ENCODE measurements at regions of chr10 and their contacts with region 1.

Region 1: DNA sequence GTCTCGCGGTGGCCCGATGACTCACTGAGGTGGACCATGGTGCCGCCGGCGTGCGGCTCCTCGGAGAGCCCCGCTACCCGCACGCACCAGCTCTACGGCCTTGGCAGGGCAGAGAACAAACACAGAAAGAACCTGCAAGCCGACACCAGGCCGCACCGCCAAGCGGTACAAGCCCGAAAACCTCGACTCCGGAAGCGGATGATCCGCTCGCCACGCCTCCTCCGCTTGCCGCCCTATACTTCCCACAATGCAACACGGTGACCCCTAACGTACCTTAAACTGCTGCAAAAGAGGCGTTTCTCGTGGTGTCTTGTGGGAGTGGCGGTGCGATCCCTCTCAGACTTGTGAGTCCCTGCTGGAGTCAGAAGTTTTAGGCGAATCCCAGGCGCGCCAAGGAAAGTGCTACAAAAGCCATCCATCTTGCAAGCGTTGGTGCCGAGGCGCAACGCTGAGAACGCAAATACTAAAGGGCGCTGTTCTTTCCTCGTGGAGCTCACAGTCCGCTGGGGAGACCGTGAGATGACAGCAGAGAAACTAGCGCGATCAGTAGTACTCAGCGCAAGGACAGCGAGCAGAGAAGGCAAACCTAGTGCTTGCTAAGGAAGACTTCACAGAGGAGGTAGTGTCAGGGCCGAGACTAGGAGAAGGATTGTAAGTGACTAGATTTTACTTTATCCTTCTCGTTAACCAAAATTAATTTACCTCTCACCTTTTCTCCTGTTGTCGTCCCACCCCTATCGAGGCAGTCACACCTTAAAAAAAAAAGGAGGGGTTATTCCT is at the start of gene MRPS16:
- DNase-seq: peak; percentile 95
- ATAC-seq: peak; percentile 90
- H3K4me3 ChIP-seq: peak within 1 kb of the TSS; percentile 76 to 98 (median 90)
- H3K4me3 Mint-ChIP-seq: peak within 1 kb of the TSS; percentile 100
- H3K27ac ChIP-seq: peak within 1 kb of the TSS; percentile 83 to 92
- H3K27ac Mint-ChIP-seq: peak within 1 kb of the TSS; percentile 90
- H3K4me1 ChIP-seq: peaks cover 23 to 28% of the 10 kb centered on the region in 2 donors
- H3K4me1 Mint-ChIP-seq: peaks cover 43% of the 10 kb centered on the region
- H3K27me3 ChIP-seq: no peaks in the 10 kb centered on the region
- H3K27me3 Mint-ChIP-seq: no peaks in the 10 kb centered on the region
- CTCF ChIP-seq: no peak
- total RNA-seq, gene MRPS16: 47.9 and 49.6 TPM in 2 replicates

Region 2: GRCh38 chr10:73110345-73110849 is 142.2 kb before region 1 on chr10 and contains the start of gene NUDT13:
- CTCF ChIA-PET with region 1: no interaction called
- POLR2A ChIA-PET with region 1: no interaction called
- intact Hi-C with region 1: loop called (anchors 5 kb)
- DNase-seq: peak; percentile 80
- ATAC-seq: peak; percentile 93
- H3K4me3 ChIP-seq: peak within 1 kb of the TSS; percentile 50 to 79 (median 71)
- H3K4me3 Mint-ChIP-seq: peak within 1 kb of the TSS; percentile 97
- H3K27ac ChIP-seq: peak within 1 kb of the TSS; percentile 26 to 62
- H3K27ac Mint-ChIP-seq: peak within 1 kb of the TSS; percentile 93
- H3K4me1 ChIP-seq: peaks cover 0 to 9% of the 10 kb centered on the region in 2 donors
- H3K4me1 Mint-ChIP-seq: peaks cover 11% of the 10 kb centered on the region
- H3K27me3 ChIP-seq: no peaks in the 10 kb centered on the region
- H3K27me3 Mint-ChIP-seq: no peaks in the 10 kb centered on the region
- CTCF ChIP-seq: no peak
- total RNA-seq, gene NUDT13: 4.5 TPM in 2 replicates

Region 3: GRCh38 chr10:73358331-73359279 is 106.0 kb after region 1 on chr10 and contains the start of gene CFAP70:
- CTCF ChIA-PET with region 1: no interaction called
- POLR2A ChIA-PET with region 1: no interaction called
- intact Hi-C with region 1: loop called (anchors 1 kb)
- DNase-seq: peak; percentile 95
- ATAC-seq: peak; percentile 97
- H3K4me3 ChIP-seq: peak within 1 kb of the TSS; percentile 58 to 84 (median 73)
- H3K4me3 Mint-ChIP-seq: peak within 1 kb of the TSS; percentile 98
- H3K27ac ChIP-seq: peak within 1 kb of the TSS; percentile 26 to 79
- H3K27ac Mint-ChIP-seq: peak within 1 kb of the TSS; percentile 94
- H3K4me1 ChIP-seq: peaks cover 6 to 11% of the 10 kb centered on the region in 2 donors
- H3K4me1 Mint-ChIP-seq: peaks cover 15% of the 10 kb centered on the region
- H3K27me3 ChIP-seq: peaks cover 0 to 6% (median 0%) of the 10 kb centered on the region in 4 experiments
- H3K27me3 Mint-ChIP-seq: peaks cover 4% of the 10 kb centered on the region
- CTCF ChIP-seq: no peak
- total RNA-seq, gene CFAP70: 2.9 and 3.6 TPM in 2 replicates

Region 4: DNA sequence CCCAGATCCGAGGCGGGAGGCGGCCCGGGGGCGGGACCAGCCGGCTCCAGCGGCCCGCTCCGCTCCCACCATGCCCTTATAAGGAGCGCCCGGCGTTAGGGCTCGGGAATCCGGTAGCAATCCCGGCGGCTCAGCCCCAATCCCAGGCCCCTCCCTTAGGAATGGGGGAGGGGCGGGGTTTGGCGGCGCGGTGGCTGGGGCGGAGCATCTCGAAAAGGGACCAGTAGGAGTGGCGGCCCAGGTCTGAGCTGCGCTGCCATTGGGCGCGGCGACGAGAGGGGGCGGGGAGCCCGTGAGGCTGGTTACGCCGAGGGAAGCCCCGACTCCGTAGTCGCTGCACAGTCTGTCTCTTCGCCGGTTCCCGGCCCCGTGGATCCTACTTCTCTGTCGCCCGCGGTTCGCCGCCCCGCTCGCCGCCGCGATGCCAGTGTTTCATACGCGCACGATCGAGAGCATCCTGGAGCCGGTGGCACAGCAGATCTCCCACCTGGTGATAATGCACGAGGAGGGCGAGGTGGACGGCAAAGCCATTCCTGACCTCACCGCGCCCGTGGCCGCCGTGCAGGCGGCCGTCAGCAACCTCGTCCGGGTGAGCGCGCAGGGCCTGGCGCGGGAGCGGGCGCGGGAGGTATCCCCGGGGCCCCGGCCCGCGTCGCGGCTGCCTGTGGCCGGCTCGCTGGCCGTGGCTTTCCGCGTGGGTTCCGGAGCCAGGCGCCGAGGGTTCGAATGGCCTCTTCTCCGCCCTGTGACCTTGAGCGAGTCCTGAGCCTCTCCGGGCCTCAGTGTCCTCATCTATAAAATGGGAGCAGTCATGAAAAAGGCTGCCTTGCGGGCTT is 745.4 kb after region 1 on chr10 and contains the start of gene VCL:
- CTCF ChIA-PET with region 1: no interaction called
- POLR2A ChIA-PET with region 1: no interaction called
- intact Hi-C with region 1: loop called (anchors 10 kb)
- DNase-seq: peak; percentile 97
- ATAC-seq: peak; percentile 97
- H3K4me3 ChIP-seq: peak within 1 kb of the TSS; percentile 77 to 96 (median 93)
- H3K4me3 Mint-ChIP-seq: peak within 1 kb of the TSS; percentile 99
- H3K27ac ChIP-seq: peak within 1 kb of the TSS; percentile 61 to 89
- H3K27ac Mint-ChIP-seq: peak within 1 kb of the TSS; percentile 96
- H3K4me1 ChIP-seq: peaks cover 20 to 26% of the 10 kb centered on the region in 2 donors
- H3K4me1 Mint-ChIP-seq: peaks cover 45% of the 10 kb centered on the region
- H3K27me3 ChIP-seq: no peaks in the 10 kb centered on the region
- H3K27me3 Mint-ChIP-seq: no peaks in the 10 kb centered on the region
- CTCF ChIP-seq: no peak
- total RNA-seq, gene VCL: 29.8 and 37.0 TPM in 2 replicates

Measured in B cell (primary cell).